Activated CD8-positive, alpha-beta T cell treated with anti-CD3 and anti-CD28 coated beads, Interleukin-2, amount 10 ng/mL, durations not matched to agents 7 days and 5 days (primary cell): ENCODE measurements at regions of chr19 and their contacts with region 1.

Region 1: DNA sequence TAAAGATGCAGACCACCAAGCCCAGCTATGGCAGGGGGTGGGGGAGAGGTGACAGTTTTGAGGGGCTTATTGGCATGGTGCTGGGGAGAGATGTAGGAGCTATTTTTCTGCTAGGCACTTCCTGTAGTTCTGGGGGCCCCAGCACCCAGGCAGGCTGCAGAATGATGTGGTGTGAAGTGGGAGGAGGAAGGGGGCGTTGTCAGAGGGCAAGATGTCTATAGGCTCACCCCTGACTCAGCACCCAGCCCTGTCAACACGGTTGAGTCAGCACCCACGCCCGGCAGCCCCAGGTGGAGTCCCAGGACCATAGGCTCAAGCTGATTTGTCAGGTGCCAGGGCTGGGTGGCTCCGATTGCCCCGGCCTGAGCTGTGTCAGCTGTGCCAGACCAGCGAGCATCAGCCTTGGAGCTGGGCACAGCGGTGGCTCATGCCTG is 5.8 kb downstream of the KLF2 start:
- DNase-seq: peak; percentile 94
- ATAC-seq: peak; percentile 69
- H3K4me3 Mint-ChIP-seq: peak overlapping the region; percentile 91
- H3K27ac Mint-ChIP-seq: peak overlapping the region; percentile 82
- H3K4me1 Mint-ChIP-seq: peaks cover 64% of the 10 kb centered on the region
- H3K27me3 Mint-ChIP-seq: peaks cover 25% of the 10 kb centered on the region

Region 2: DNA sequence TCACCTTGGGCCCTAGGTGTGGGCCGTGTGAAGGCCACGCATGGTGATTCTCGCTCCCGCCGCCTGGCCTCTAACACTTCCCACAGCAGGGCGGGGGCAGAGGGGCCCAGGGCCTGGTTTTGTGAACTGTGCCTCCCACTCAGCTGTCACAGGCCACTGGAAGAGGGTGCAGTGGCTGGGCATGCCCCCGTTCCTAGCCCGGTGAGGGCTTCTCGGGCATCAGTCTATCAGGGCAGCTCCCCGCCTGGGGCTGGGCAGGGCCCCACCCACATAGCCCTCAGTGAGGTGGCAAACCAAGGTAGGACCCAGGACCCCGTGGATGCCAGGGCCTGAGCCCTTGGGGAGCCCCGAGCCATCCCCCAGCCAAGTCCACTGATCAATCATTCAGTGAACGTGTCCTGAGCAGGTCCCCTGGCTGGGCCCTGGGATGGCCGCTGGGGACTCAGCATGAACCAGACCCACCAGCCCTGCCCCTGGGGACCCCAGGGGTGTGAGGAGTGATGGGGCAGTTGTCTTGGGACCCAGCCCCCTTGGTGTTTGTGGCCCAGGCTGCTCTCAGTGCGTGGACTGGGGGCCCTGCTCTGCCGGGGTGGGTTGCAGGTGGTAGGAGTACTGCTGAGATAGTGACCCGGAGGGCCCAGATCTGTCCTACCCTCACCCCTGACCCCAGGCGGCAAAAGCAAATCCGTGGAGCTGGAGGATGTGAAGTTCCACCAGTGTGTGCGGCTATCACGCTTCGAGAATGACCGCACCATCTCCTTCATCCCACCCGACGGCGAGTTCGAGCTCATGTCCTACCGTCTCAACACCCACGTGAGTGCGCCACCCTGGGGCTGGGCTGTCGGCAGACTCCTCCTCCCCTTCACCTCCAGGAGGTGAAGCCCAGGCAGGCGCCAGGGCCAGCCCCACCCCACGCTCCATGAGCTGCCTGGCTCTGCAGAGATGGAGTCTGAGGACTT is 103.2 kb before region 1 on chr19:
- CTCF ChIA-PET with region 1: no interaction called
- POLR2A ChIA-PET with region 1: no interaction called
- DNase-seq: no peak
- ATAC-seq: no peak
- H3K4me3 Mint-ChIP-seq: no peak overlapping the region
- H3K27ac Mint-ChIP-seq: no peak overlapping the region
- H3K4me1 Mint-ChIP-seq: peaks cover under 1% of the 10 kb centered on the region
- H3K27me3 Mint-ChIP-seq: no peaks in the 10 kb centered on the region

Region 3: GRCh38 chr19:16301999-16302694 is 28.2 kb before region 1 on chr19:
- CTCF ChIA-PET with region 1: no interaction called
- POLR2A ChIA-PET with region 1: no interaction called
- DNase-seq: no peak
- ATAC-seq: no peak
- H3K4me3 Mint-ChIP-seq: no peak overlapping the region
- H3K27ac Mint-ChIP-seq: no peak overlapping the region
- H3K4me1 Mint-ChIP-seq: no peaks in the 10 kb centered on the region
- H3K27me3 Mint-ChIP-seq: peaks cover 13% of the 10 kb centered on the region

Region 4: GRCh38 chr19:16376649-16377048 is 46.3 kb after region 1 on chr19:
- CTCF ChIA-PET with region 1: interaction called, 70 read pairs
- POLR2A ChIA-PET with region 1: interaction called, 556 read pairs
- DNase-seq: peak; percentile 46
- ATAC-seq: no peak
- H3K4me3 Mint-ChIP-seq: no peak overlapping the region
- H3K27ac Mint-ChIP-seq: peak overlapping the region; percentile 44
- H3K4me1 Mint-ChIP-seq: peaks cover 54% of the 10 kb centered on the region
- H3K27me3 Mint-ChIP-seq: no peaks in the 10 kb centered on the region